Thyroid gland (tissue), 4 donors: ENCODE measurements at regions of chr19 and their contacts with region 1.

Region 1: GRCh38 chr19:29714953-29715700 is at the start of gene C19orf12:
- DNase-seq: peak; percentile 72 to 77
- H3K4me3 ChIP-seq: peak within 1 kb of the TSS; percentile 80 to 89 (median 84)
- H3K27ac ChIP-seq: peak within 1 kb of the TSS; percentile 84 to 91 (median 85)
- H3K4me1 ChIP-seq: peaks cover 17 to 22% of the 10 kb centered on the region in 2 donors
- H3K27me3 ChIP-seq: no peaks in the 10 kb centered on the region
- CTCF ChIP-seq: peak in 1 of 6 experiments; percentile 3
- POLR2A ChIP-seq: peak; percentile 34 to 82
- total RNA-seq, gene C19orf12: 24.4 to 34.0 (median 31.9) TPM

Region 2: DNA sequence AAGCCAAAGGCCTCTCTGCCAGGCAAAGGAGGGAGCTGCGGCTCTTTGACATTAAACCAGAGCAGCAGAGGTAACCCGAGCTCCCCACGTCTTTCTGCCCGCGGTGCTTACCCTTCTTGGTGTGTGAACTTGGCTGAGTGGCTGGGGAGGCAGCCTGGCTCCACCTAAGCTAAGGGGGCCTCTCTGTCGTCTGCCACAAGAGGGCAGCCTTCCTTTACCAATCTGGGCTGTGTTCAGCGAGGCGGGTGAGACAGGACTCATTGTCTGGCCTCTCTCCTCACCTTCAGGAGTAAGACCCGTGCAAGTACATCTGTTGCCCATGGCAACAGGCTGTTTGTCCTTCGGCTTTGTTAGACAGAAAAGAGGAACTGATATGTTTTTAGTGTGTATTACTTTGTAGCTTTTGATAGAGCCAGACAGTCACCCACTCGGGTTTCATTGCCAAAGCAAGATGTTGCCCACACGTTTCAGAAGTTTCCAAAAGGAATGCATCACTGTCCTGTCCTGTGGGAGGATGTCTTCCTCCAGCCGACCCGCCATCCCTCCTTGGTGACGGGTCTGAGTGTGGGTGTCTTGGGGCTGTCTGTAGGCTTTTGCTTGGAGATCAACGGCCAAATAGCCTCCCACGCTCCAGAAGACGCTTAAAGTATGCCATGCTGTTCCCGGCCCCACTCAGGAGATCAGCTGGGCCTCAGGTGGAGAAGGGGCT is 104.4 kb before region 1 on chr19:
- intact Hi-C with region 1: loop called (anchors 5 kb)
- DNase-seq: peak; percentile 77 to 78
- H3K4me3 ChIP-seq: no peak overlapping the region
- H3K27ac ChIP-seq: no peak overlapping the region
- H3K4me1 ChIP-seq: peaks cover 5% of the 10 kb centered on the region in 2 donors
- H3K27me3 ChIP-seq: no peaks in the 10 kb centered on the region
- CTCF ChIP-seq: peak; percentile 23 to 75 (median 68)
- POLR2A ChIP-seq: no peak

Region 3: DNA sequence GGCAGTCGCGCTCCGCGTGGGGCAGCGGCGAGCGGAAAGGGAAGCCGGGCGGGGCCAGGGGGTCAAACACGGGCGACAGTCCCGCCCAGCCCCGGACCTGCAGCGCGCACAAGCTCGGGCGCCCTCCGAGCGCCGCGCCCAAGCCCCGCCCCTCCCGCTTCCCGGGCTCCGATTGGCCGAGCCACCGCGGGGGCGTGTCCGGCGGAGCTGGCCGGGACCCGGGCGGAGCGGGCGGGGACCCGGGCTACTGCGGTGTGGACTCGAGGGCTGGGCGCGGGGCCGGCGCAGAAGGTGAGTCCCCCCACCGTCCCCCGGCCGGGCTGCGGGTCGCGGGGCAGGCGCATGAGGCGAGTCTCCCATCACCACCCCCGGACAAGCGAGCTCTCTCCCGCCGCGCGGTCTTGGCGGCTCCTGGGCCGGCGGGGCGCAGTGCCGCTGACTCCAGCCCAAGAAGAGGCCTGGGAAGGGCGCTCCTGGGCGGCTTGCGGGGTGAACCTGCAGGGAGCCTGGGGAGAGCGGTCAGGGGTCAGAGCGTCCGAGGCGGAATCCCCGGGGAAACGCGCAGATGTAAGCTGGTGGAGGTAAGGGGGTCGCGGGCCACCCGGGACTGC is 49.8 kb before region 1 on chr19 and contains the start of gene PLEKHF1:
- intact Hi-C with region 1: loop called (anchors 10 kb)
- DNase-seq: peak; percentile 89 to 90
- H3K4me3 ChIP-seq: peak within 1 kb of the TSS; percentile 30 to 93 (median 87)
- H3K27ac ChIP-seq: peak within 1 kb of the TSS; percentile 64 to 81 (median 66)
- H3K4me1 ChIP-seq: peaks cover 26 to 60% of the 10 kb centered on the region in 2 donors
- H3K27me3 ChIP-seq: no peaks in the 10 kb centered on the region
- CTCF ChIP-seq: no peak
- POLR2A ChIP-seq: peak in 1 of 2 donors; percentile 60
- total RNA-seq, gene PLEKHF1: 12.1 to 20.3 (median 16.5) TPM

Region 4: DNA sequence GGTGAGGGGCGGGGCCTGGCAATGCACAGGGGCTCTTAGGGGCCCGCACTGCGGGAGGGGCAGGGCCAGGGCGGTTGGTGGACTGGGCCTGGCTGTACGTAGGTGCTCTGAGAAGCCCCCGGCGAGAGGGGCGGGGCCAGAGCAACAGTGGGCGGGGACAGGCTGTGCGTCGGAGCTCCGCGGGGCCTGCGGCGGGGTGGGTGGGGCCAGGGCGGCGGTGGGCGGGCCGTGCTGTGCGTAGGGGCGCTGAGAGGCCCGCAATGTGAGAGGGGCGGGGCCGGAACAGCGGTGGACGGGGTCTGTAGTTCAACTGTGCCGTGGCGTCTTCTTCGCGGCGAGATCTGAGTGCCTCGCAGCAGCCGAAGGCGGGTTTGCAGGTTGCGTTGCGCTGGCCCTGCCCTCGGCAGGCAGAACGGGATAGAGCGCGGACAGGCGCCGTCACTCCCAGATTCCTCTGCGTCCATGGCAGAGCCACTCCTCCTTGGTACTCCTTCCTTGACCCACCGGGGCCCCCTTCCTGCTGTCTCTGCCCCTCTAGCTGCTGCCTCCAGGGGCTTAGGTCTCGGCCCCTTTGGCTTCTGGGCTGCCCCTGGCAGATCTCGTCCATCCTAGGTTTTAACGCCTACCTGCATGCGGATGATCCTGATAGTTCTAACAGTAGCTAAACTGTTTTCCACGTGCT is 129.9 kb after region 1 on chr19:
- intact Hi-C with region 1: no loop called
- DNase-seq: peak; percentile 95 to 96
- H3K4me3 ChIP-seq: peak overlapping the region; percentile 31 to 86 (median 62)
- H3K27ac ChIP-seq: peak overlapping the region; percentile 76 to 86 (median 79)
- H3K4me1 ChIP-seq: peaks cover 16 to 23% of the 10 kb centered on the region in 2 donors
- H3K27me3 ChIP-seq: no peaks in the 10 kb centered on the region
- CTCF ChIP-seq: no peak
- POLR2A ChIP-seq: peak in 1 of 2 donors; percentile 69